ENCODE measurements at regions of chr3 and their contacts with region 1.

Region 1: DNA sequence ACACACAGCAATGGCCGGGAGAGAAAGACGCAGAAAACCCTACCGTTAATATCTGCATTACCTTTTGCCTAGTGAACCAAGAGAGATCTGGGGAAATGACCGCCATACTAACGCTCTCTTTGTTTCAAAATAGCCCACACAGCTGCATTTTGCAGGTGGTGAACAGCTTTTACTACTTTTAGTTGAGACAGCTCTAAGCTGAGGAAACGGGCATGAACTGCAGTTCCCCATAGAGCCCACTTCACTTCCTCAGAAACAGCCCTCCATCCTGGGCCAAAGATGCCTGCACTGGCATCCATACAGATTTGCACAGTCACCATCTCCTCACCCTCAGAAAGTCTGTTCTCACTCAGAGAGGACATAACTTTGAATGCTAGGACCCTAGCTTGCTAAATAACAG is 45.0 kb downstream of the ZNF860 start:
- DNase-seq: no peak
- ATAC-seq: no peak
- H3K4me3 ChIP-seq: no peak overlapping the region
- H3K27ac ChIP-seq: no peak overlapping the region
- H3K4me1 ChIP-seq: peaks cover 8% of the 10 kb centered on the region
- H3K27me3 ChIP-seq: no peaks in the 10 kb centered on the region
- CTCF ChIP-seq: no peak
- EP300 ChIP-seq: no peak
- POLR2A ChIP-seq: no peak
- RAD21 ChIP-seq: no peak

Region 2: DNA sequence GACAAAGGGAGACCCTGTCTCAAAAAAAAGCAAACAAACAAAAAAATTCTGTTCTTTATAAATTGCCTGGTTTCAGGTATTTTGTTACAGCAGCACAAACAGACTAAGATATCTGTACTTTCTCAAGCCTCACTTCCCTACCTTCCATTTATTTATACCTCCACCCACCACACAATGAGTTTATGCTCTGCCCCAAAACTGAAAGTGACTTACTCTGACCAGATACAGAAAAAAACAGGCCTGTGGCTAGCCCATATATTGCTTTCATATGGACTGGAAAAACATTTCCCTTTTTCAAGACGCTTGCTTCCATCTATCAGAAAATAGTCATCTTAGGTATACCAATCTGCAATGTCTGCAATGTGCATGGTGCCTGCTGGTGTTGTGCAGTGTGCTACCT is 71.2 kb after region 1 on chr3:
- CTCF ChIA-PET with region 1: no interaction called
- POLR2A ChIA-PET with region 1: no interaction called
- in situ Hi-C with region 1: no loop called
- intact Hi-C with region 1: loop called (anchors 5 kb)
- DNase-seq: no peak
- ATAC-seq: no peak
- H3K4me3 ChIP-seq: no peak overlapping the region
- H3K27ac ChIP-seq: no peak overlapping the region
- H3K4me1 ChIP-seq: peaks cover 16% of the 10 kb centered on the region; the same call in 1 of the 2 replicates
- H3K27me3 ChIP-seq: peaks cover 2 to 22% of the 10 kb centered on the region in 2 experiments; a peak in 2 of 5 replicates
- CTCF ChIP-seq: no peak
- EP300 ChIP-seq: no peak
- POLR2A ChIP-seq: no peak
- RAD21 ChIP-seq: no peak